Adrenal gland (tissue), 19 donors: ENCODE measurements at regions of chr3 and their contacts with region 1.

Region 1: DNA sequence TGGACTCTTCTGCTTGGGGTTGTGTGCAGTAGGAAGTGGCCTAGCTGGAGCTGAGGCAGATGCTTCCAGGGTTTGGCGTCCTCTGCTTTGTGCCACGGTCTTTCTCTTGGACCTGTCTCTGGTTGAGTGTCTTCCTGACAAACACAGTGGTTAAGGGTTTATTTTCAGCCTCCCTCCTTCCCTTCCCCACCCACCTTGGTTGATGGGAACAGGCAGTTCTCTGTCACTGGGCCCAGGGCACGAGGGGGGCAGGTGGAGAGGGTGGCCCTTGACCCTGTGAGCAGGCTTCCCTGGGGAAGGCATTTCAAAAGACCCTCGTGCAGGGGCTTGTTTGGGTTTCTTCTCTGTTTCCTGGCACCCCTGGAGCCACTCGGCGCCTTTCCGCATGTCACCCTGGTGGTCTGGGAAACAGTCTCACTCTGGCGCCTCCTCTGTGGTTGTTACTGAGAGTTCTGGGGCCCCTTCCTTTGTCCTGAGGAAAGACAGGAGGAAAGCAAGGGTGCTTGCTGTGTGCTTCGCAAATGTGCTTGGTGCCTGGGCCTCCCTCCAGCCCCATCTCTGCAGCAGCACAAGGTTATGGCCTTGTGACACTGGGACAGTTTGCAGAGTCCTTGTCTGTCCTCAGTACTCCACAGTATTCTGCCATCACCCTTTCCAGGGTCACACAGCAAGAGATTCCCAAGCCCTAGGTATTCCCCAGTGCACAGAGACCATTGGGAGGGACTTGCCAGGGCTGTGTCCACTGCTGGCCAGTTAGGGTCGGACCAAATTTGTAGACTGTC is 10.3 kb upstream of the STAB1 start:
- DNase-seq: peak in 5 of 7 donors; percentile 64 to 71 (median 68)
- H3K4me3 ChIP-seq: no peak overlapping the region
- H3K27ac ChIP-seq: peak overlapping the region in 4 of 5 donors; percentile 64 to 94 (median 82)
- H3K4me1 ChIP-seq: peaks cover 34 to 62% of the 10 kb centered on the region in 2 donors
- H3K27me3 ChIP-seq: no peaks in the 10 kb centered on the region
- CTCF ChIP-seq: no peak
- POLR2A ChIP-seq: no peak

Region 2: GRCh38 chr3:52524752-52525679 is 40.1 kb after region 1 on chr3:
- intact Hi-C with region 1: loop called in 1 of 2 experiments (anchors 5 kb)
- DNase-seq: peak in 5 of 7 donors; percentile 51 to 67 (median 61)
- H3K4me3 ChIP-seq: no peak overlapping the region
- H3K27ac ChIP-seq: peak overlapping the region in 3 of 5 donors; percentile 13 to 89 (median 84)
- H3K4me1 ChIP-seq: peaks cover 24 to 48% of the 10 kb centered on the region in 2 donors
- H3K27me3 ChIP-seq: no peaks in the 10 kb centered on the region
- CTCF ChIP-seq: no peak
- POLR2A ChIP-seq: no peak